A673 (cell line): ENCODE measurements at regions of chr20 and their contacts with region 1.

Region 1: GRCh38 chr20:35615667-35616464 is at the start of gene SPAG4:
- DNase-seq: no peak
- H3K4me3 ChIP-seq: peak within 1 kb of the TSS; percentile 51
- H3K27ac ChIP-seq: peak within 1 kb of the TSS; percentile 91
- H3K4me1 ChIP-seq: peaks cover 26% of the 10 kb centered on the region
- H3K27me3 ChIP-seq: no peaks in the 10 kb centered on the region
- CTCF ChIP-seq: no peak
- total RNA-seq, gene SPAG4: 0.67 and 1.2 TPM in 2 replicates

Region 2: GRCh38 chr20:33674295-33675135 is 1941.4 kb before region 1 on chr20 and contains the start of gene NECAB3:
- CTCF ChIA-PET with region 1: no interaction called
- POLR2A ChIA-PET with region 1: interaction called, 17 read pairs
- intact Hi-C with region 1: no loop called
- DNase-seq: peak; percentile 83
- H3K4me3 ChIP-seq: peak within 1 kb of the TSS; percentile 78
- H3K27ac ChIP-seq: peak within 1 kb of the TSS; percentile 88
- H3K4me1 ChIP-seq: peaks cover 31% of the 10 kb centered on the region
- H3K27me3 ChIP-seq: no peaks in the 10 kb centered on the region
- CTCF ChIP-seq: no peak
- total RNA-seq, gene NECAB3: 83.1 and 100 TPM in 2 replicates

Region 3: DNA sequence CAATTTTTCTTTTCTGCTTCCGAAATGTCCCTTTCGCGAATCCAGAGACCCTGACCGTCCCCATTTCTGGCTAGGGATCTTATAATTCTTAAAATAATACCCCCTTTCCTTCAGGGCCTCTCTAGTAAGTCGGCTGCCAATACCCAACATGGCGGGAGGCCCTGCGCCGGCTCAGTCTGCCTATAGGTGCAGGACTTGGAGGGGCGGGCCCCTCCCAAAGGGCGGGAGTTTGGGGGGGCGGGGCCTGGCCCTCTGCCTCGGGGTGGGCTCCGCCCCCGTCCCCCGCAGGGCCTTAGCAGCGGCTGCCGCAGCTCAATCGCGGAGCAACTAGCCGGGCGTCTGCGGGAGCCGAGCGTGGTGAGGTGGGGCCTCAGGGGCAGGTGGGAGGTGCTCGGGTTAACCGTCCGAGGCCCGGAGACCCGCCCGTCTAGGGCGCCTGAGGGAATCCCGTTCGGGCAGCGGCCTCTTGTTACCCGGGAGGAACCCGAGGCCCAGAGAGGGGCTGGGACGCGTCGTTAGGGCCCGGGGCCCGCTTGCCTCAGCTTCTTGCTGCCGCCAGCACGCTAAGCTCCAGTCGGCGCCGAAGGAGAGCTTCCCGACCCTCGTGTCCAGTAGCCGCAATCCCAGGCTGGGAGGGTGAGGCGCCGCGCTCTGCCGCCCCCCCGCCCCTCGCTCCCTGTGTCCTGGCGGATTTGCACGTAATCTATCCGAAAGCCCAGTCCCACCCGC is 160.8 kb before region 1 on chr20 and contains the start of gene CEP250:
- CTCF ChIA-PET with region 1: no interaction called
- POLR2A ChIA-PET with region 1: no interaction called
- intact Hi-C with region 1: no loop called
- DNase-seq: peak; percentile 97
- H3K4me3 ChIP-seq: peak within 1 kb of the TSS; percentile 89
- H3K27ac ChIP-seq: peak within 1 kb of the TSS; percentile 99
- H3K4me1 ChIP-seq: peaks cover 28% of the 10 kb centered on the region
- H3K27me3 ChIP-seq: no peaks in the 10 kb centered on the region
- CTCF ChIP-seq: no peak
- total RNA-seq, gene CEP250: 56.6 and 59.0 TPM in 2 replicates

Region 4: GRCh38 chr20:35648836-35649235 is 33.0 kb after region 1 on chr20:
- CTCF ChIA-PET with region 1: no interaction called
- POLR2A ChIA-PET with region 1: no interaction called
- intact Hi-C with region 1: no loop called
- DNase-seq: no peak
- H3K4me3 ChIP-seq: no peak overlapping the region
- H3K27ac ChIP-seq: no peak overlapping the region
- H3K4me1 ChIP-seq: no peaks in the 10 kb centered on the region
- H3K27me3 ChIP-seq: no peaks in the 10 kb centered on the region
- CTCF ChIP-seq: no peak

Region 5: DNA sequence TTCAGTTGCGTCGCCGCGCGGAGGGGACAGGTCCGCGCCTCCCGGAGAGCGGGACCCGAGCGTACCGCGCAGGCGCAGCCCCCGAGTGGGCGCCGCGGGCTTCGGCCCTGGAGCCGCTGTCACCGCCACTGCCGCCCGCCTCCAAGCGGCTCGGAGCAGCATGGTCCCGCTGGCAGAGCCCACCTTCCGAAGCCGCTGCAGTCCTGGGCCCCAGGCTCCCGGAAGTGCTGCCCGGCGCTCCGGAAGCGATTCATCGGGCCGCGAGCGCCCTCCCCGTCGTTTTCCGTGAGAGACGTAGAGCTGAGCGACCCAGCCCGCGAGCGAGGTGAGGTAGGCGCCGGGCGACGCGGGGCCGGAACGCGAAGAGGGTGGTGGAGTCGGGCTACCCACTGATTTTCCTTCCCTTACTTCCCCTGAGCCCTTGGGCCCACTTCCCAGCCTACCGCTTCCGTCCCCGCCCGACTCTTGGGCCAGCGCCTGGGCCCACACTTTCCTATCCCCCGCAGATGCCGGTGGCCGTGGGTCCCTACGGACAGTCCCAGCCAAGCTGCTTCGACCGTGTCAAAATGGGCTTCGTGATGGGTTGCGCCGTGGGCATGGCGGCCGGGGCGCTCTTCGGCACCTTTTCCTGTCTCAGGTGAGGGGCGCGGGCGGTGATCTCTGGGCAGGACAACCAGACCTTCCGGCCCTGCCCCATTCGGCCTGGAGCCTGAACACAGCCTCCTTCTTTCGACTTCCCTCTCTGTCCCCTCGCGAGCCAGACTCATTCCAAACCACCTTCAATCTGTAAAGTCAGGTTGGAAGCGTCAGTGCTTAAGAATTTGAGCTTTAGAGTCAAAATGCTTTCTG is 83.5 kb after region 1 on chr20 and contains the starts of genes NFS1 and ROMO1:
- CTCF ChIA-PET with region 1: no interaction called
- POLR2A ChIA-PET with region 1: no interaction called
- intact Hi-C with region 1: loop called (anchors 2 kb)
- DNase-seq: peak; percentile 96
- H3K4me3 ChIP-seq: peak within 1 kb of the TSS; percentile 87
- H3K27ac ChIP-seq: peak within 1 kb of the TSS; percentile 89
- H3K4me1 ChIP-seq: peaks cover 28% of the 10 kb centered on the region
- H3K27me3 ChIP-seq: no peaks in the 10 kb centered on the region
- CTCF ChIP-seq: peak; percentile 47
- total RNA-seq, gene NFS1: 22.2 and 23.2 TPM in 2 replicates
- total RNA-seq, gene ROMO1: 134 and 153 TPM in 2 replicates

Region 6: GRCh38 chr20:35954200-35954906 is 338.5 kb after region 1 on chr20 and contains the start of gene SCAND1:
- CTCF ChIA-PET with region 1: no interaction called
- POLR2A ChIA-PET with region 1: no interaction called
- intact Hi-C with region 1: no loop called
- DNase-seq: peak; percentile 98
- H3K4me3 ChIP-seq: peak within 1 kb of the TSS; percentile 91
- H3K27ac ChIP-seq: peak within 1 kb of the TSS; percentile 97
- H3K4me1 ChIP-seq: peaks cover 9% of the 10 kb centered on the region
- H3K27me3 ChIP-seq: no peaks in the 10 kb centered on the region
- CTCF ChIP-seq: peak; percentile 100
- total RNA-seq, gene SCAND1: 84.5 and 95.2 TPM in 2 replicates